Activated T-helper 2 cell treated with anti-CD3 and anti-CD28 coated beads, Interferon-gamma antibody, Interleukin-2, Interleukin-4, amounts not matched to agents 10 μg/mL and 5 μg/mL and 100 μg/mL, durations not matched to agents 14 hours and 24 hours and 36 hours (primary cell): ENCODE measurements at regions of chr6 and their contacts with region 1.

Region 1: GRCh38 chr6:112043032-112044007 is 10.6 kb upstream of the CCN6 start:
- DNase-seq: peak; percentile 85
- H3K4me3 Mint-ChIP-seq: peak overlapping the region; percentile 91
- H3K27ac Mint-ChIP-seq: peak overlapping the region; percentile 98
- H3K4me1 Mint-ChIP-seq: peaks cover 32% of the 10 kb centered on the region
- H3K27me3 Mint-ChIP-seq: no peaks in the 10 kb centered on the region

Region 2: DNA sequence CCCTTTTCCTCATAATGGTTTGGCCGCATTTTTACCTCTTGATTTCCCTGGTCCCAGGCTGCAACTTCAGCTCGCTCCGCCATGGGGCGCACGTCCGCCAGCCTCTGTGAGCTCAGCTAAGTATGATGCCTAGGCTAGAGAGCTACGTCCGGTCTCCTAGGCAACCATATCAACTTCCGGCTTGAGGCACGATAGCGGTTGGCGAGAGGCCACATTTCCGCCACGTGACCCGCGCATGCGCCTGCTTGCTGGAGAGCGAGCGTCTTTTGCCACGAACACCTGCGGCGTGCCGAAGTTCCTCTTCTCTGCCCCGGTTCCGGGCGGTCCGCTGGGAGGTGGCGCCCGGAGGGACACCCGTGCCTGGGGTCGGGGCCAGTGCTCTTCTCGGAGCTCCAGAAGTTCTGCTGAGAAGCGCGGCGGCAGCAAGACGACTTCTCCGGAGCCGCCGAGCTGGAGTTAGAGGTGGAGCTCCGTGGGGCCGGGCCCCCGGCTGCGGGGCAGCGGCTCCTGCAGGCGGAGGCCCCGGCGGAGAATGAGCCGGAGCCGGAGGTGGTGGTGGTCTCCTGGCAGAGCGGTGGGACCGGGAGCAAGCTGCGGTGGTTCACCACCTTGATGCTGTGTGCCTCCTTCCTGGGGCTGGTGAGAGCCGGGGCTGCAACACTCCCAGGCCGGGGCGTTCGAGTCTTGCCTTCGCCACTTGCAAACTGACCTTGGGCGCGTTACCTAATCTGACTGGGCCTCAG is 784.1 kb before region 1 on chr6:
- intact Hi-C with region 1: loop called (anchors 1 kb)
- DNase-seq: peak; percentile 99
- H3K4me3 Mint-ChIP-seq: peak overlapping the region; percentile 78
- H3K27ac Mint-ChIP-seq: peak overlapping the region; percentile 63
- H3K4me1 Mint-ChIP-seq: peaks cover 27% of the 10 kb centered on the region
- H3K27me3 Mint-ChIP-seq: peaks cover 12% of the 10 kb centered on the region

Region 3: GRCh38 chr6:111709615-111710398 is 333.5 kb before region 1 on chr6:
- intact Hi-C with region 1: loop called (anchors 1 kb)
- DNase-seq: peak; percentile 43
- H3K4me3 Mint-ChIP-seq: no peak overlapping the region
- H3K27ac Mint-ChIP-seq: peak overlapping the region; percentile 49
- H3K4me1 Mint-ChIP-seq: peaks cover 44% of the 10 kb centered on the region
- H3K27me3 Mint-ChIP-seq: no peaks in the 10 kb centered on the region

Region 4: DNA sequence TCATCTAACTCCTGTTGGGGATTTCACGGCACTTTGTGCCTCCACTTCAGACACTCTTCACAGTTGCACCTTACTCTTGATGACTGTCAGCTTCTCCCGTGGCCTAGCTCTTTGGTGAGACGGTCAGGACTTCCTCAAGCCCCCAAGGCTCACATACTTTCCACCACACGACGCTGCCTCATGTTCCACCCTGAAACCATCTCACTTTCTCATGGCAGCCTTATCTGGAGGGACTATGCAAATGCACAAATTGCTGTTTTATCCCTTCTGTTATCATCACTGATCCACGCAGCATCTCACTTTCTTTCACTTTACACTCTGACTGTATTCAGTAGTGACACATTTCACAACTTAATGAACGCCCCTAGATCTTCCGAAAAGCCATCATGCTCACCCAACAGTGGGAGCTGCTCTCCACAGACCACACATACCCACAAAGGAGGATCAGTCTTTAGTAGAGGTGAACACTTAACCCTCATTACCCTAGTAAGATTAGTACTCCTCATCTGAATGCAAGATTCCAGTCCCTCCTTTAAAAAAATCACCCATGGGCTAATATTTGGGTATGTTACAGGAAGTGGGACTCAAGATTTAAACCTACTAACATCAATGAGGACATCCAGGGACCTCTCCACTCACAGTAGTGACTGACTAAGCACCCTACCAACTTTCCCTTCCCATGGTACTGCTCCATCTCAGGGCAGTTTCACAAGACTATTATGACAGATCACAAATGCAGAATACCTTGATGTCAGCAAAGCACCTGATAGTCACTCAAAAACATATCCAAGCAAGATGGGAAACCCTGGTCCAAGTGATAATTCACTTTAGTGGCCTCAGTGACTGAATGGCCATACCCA is 205.4 kb before region 1 on chr6:
- intact Hi-C with region 1: loop called (anchors 1 kb)
- DNase-seq: peak; percentile 59
- H3K4me3 Mint-ChIP-seq: peak overlapping the region; percentile 77
- H3K27ac Mint-ChIP-seq: peak overlapping the region; percentile 97
- H3K4me1 Mint-ChIP-seq: peaks cover 67% of the 10 kb centered on the region
- H3K27me3 Mint-ChIP-seq: no peaks in the 10 kb centered on the region

Region 5: DNA sequence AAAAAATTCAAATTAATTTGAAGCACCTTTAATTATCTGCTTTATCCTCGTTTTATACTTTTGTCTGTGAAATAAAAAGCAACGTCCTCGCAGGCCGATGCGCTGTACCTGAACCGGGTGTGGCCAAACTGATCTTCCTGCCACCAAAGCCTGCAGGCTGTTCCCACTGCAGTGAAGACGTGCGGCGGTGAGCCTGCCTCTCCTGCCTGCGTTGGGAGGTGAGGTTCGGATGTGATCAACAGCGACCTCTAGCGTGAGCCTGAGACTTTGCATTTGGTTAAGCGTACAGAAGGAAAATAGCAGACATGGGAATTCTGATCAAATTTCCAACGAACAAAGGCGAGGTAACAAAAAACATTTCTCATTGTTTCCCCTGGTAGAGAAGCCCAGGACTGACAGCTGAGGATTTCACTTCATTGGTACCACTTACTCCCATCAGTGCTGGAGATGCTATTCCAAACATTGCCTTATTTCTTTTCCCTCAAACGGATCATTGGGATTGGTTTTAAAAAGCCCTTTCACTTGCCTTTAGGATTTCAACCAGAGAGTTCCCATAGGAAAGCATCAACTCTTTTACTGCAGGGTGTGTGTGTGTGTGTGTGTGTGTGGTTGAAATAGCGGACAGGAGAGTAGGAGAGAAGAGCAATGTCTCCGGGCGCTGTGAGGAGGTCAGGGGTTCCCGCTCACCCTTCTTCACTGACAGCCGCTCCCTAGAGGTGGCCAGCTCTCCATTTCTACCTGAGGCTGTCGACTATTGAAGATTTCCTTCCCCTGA is 46.1 kb before region 1 on chr6:
- intact Hi-C with region 1: loop called (anchors 1 kb)
- DNase-seq: peak; percentile 69
- H3K4me3 Mint-ChIP-seq: no peak overlapping the region
- H3K27ac Mint-ChIP-seq: no peak overlapping the region
- H3K4me1 Mint-ChIP-seq: peaks cover 37% of the 10 kb centered on the region
- H3K27me3 Mint-ChIP-seq: no peaks in the 10 kb centered on the region

Region 6: GRCh38 chr6:112027942-112028674 is 15.2 kb before region 1 on chr6:
- intact Hi-C with region 1: loop called (anchors 1 kb)
- DNase-seq: peak; percentile 61
- H3K4me3 Mint-ChIP-seq: peak overlapping the region; percentile 53
- H3K27ac Mint-ChIP-seq: peak overlapping the region; percentile 95
- H3K4me1 Mint-ChIP-seq: peaks cover 60% of the 10 kb centered on the region
- H3K27me3 Mint-ChIP-seq: no peaks in the 10 kb centered on the region

Region 7: DNA sequence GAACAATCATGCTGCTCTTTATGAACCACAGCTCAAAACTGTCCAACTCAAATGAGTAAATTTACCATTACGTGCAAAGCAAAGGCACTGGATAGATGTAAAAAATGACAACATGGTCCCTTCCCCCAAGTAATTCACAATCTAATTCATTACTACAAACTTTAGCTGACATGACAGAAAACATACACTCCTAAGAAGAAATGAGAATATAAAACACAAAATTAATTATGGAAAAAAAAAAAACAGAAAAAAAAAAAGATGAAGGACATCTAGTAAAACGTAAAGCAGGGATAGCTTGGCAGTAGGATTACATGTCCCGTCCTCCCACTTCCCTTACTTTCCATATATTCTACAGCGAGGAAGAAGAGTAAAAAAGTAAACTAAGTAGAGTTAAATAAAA is 38.2 kb after region 1 on chr6:
- intact Hi-C with region 1: no loop called
- DNase-seq: no peak
- H3K4me3 Mint-ChIP-seq: no peak overlapping the region
- H3K27ac Mint-ChIP-seq: no peak overlapping the region
- H3K4me1 Mint-ChIP-seq: peaks cover 8% of the 10 kb centered on the region
- H3K27me3 Mint-ChIP-seq: no peaks in the 10 kb centered on the region

Region 8: GRCh38 chr6:112237595-112237994 is 194.3 kb after region 1 on chr6:
- intact Hi-C with region 1: no loop called
- DNase-seq: no peak
- H3K4me3 Mint-ChIP-seq: no peak overlapping the region
- H3K27ac Mint-ChIP-seq: no peak overlapping the region
- H3K4me1 Mint-ChIP-seq: peaks cover 35% of the 10 kb centered on the region
- H3K27me3 Mint-ChIP-seq: peaks cover 42% of the 10 kb centered on the region